ENCODE measurements at regions of chr2 and their contacts with region 1.

Region 1: DNA sequence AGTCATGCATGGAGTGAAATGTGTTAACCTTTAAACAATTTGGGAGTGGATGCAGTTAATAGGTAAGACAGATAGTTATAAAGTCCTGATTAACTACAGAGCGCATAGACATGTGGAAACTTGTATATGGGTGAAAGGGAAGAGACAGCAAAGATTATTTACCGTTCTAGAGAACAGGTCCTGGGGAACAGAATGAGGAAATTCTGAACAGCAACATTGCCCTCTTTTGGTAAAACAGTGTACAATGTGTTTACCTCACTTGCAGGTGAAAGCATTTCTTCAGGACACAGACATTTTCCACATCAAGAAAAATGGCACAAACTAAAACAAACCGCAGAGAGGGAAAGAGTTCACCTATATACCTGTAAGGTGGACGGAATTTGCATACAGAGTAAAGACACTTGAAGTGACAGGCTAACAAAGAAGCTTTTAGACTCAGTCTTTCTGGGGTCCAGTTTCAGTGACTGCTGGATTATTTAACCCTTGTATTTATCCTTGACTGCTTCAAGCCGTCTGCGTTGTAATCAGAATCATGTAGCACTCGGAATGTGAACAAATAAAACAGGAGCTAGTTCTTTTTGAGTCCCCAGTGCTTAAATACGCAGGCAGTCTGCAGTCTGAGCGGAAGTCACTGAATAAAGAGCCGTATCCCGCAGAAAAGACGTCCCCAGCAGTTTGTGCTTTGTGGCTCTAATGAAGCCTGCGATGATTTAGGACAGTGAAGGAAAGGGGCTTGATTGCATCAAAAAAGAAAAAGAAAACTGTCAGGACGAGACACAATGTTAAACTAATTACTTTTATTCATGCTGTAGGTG is 364.8 kb upstream of the GALNT5 start:
- DNase-seq: peak; percentile 60
- ATAC-seq: peak; percentile 79
- H3K4me3 ChIP-seq: peak overlapping the region; percentile 20
- H3K27ac ChIP-seq: no peak overlapping the region
- H3K4me1 ChIP-seq: no peaks in the 10 kb centered on the region
- H3K27me3 ChIP-seq: no peaks in the 10 kb centered on the region
- CTCF ChIP-seq: peak; percentile 46
- POLR2A ChIP-seq: no peak
- RAD21 ChIP-seq: peak; percentile 56

Region 2: DNA sequence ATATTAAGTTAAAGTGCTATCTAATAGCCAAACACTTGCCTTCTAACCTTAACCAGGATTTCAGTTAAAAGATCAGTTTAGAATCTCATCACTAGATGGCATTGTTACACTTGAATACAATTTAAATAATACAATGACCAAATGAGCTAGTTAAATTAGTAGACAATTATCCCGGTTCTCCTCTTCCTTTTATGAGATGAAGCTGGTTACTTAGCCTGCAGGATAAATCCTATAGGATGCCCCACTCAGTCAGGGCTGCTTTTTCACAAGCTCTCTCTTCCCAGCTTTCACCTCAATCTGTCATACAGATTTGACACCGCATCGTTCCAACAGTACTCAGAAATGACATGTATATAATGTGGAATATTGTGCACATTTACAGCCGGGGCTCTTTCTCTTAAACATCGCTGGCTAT is 1515.4 kb before region 1 on chr2:
- CTCF ChIA-PET with region 1: no interaction called
- POLR2A ChIA-PET with region 1: no interaction called
- dilution Hi-C with region 1: no loop called
- in situ Hi-C with region 1: no loop called
- intact Hi-C with region 1: loop called (anchors 2 kb)
- DNase-seq: peak; percentile 35
- ATAC-seq: no peak
- H3K4me3 ChIP-seq: no peak overlapping the region
- H3K27ac ChIP-seq: no peak overlapping the region
- H3K4me1 ChIP-seq: no peaks in the 10 kb centered on the region
- H3K27me3 ChIP-seq: no peaks in the 10 kb centered on the region
- CTCF ChIP-seq: peak; percentile 43
- POLR2A ChIP-seq: no peak
- RAD21 ChIP-seq: peak; percentile 46

Region 3: DNA sequence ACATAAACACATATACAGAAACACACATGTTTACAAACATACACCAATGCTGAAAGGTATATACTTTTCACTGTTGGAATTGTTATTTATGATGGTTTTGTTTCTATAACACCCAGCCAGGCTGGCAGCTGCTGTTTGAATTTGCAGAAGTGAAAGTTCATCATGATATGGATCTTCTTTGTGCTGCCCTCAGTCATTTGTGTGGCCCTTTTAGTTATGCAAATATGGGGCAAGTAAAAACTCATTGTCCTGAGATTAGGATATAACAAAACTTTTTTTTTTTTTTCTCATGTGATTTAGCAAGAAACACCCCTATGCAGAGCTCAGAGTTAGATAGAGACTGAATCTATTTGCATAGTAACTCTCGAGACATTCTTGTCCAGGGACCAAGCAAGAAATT is 1480.1 kb before region 1 on chr2:
- CTCF ChIA-PET with region 1: interaction called, 10 read pairs
- POLR2A ChIA-PET with region 1: no interaction called
- dilution Hi-C with region 1: no loop called
- in situ Hi-C with region 1: no loop called
- intact Hi-C with region 1: no loop called
- DNase-seq: no peak
- ATAC-seq: no peak
- H3K4me3 ChIP-seq: no peak overlapping the region
- H3K27ac ChIP-seq: no peak overlapping the region
- H3K4me1 ChIP-seq: no peaks in the 10 kb centered on the region
- H3K27me3 ChIP-seq: no peaks in the 10 kb centered on the region
- CTCF ChIP-seq: no peak
- POLR2A ChIP-seq: no peak
- RAD21 ChIP-seq: no peak

Region 4: GRCh38 chr2:156192468-156192867 is 700.2 kb before region 1 on chr2:
- CTCF ChIA-PET with region 1: no interaction called
- POLR2A ChIA-PET with region 1: no interaction called
- dilution Hi-C with region 1: no loop called
- in situ Hi-C with region 1: no loop called
- intact Hi-C with region 1: loop called (anchors 5 kb)
- DNase-seq: no peak
- ATAC-seq: no peak
- H3K4me3 ChIP-seq: no peak overlapping the region
- H3K27ac ChIP-seq: no peak overlapping the region
- H3K4me1 ChIP-seq: no peaks in the 10 kb centered on the region
- H3K27me3 ChIP-seq: no peaks in the 10 kb centered on the region
- CTCF ChIP-seq: 0 out of 2 replicates have a peak, but pooled peaks have one; percentile 27
- POLR2A ChIP-seq: no peak
- RAD21 ChIP-seq: no peak

Region 5: GRCh38 chr2:156589381-156590079 is 303.1 kb before region 1 on chr2:
- CTCF ChIA-PET with region 1: no interaction called
- POLR2A ChIA-PET with region 1: no interaction called
- dilution Hi-C with region 1: no loop called
- in situ Hi-C with region 1: no loop called
- intact Hi-C with region 1: loop called (anchors 2 kb)
- DNase-seq: peak; percentile 62
- ATAC-seq: peak; percentile 74
- H3K4me3 ChIP-seq: no peak overlapping the region
- H3K27ac ChIP-seq: no peak overlapping the region
- H3K4me1 ChIP-seq: no peaks in the 10 kb centered on the region
- H3K27me3 ChIP-seq: no peaks in the 10 kb centered on the region
- CTCF ChIP-seq: peak; percentile 72
- POLR2A ChIP-seq: no peak
- RAD21 ChIP-seq: peak; percentile 85

Region 6: GRCh38 chr2:156792242-156792840 is 100.3 kb before region 1 on chr2:
- CTCF ChIA-PET with region 1: no interaction called
- POLR2A ChIA-PET with region 1: no interaction called
- dilution Hi-C with region 1: no loop called
- in situ Hi-C with region 1: no loop called
- intact Hi-C with region 1: no loop called
- DNase-seq: no peak
- ATAC-seq: no peak
- H3K4me3 ChIP-seq: no peak overlapping the region
- H3K27ac ChIP-seq: no peak overlapping the region
- H3K4me1 ChIP-seq: no peaks in the 10 kb centered on the region
- H3K27me3 ChIP-seq: no peaks in the 10 kb centered on the region
- CTCF ChIP-seq: no peak
- POLR2A ChIP-seq: no peak
- RAD21 ChIP-seq: no peak

Region 7: DNA sequence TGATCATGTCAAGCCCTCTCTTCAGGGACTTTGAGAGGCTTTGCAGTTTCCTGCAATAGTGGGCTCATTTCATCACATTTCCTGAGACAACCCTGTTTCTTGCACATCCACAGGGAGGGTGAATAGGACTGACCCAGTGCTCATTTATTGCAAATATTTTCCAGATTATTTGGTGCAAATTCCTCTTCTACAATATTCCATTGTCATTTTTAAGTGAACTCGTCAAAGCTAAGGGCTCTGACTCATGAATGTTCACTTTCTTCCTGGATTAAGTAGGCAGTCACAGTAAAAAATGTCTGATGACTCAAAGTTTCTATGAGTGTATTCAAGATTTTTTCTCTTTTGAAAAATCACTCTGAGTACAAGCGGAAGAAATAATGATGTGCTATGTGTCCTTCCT is 139.3 kb after region 1 on chr2:
- CTCF ChIA-PET with region 1: no interaction called
- POLR2A ChIA-PET with region 1: no interaction called
- dilution Hi-C with region 1: no loop called
- in situ Hi-C with region 1: no loop called
- intact Hi-C with region 1: loop called (anchors 5 kb)
- DNase-seq: peak; percentile 94
- ATAC-seq: peak; percentile 83
- H3K4me3 ChIP-seq: no peak overlapping the region
- H3K27ac ChIP-seq: 0 out of 2 replicates have a peak overlapping the region, but pooled peaks have one; percentile 26
- H3K4me1 ChIP-seq: peaks cover 4% of the 10 kb centered on the region; the same call in 1 of the 2 replicates
- H3K27me3 ChIP-seq: no peaks in the 10 kb centered on the region
- CTCF ChIP-seq: no peak
- POLR2A ChIP-seq: no peak
- RAD21 ChIP-seq: no peak

Region 8: GRCh38 chr2:157182834-157183396 is 290.2 kb after region 1 on chr2:
- CTCF ChIA-PET with region 1: interaction called, 5 read pairs
- POLR2A ChIA-PET with region 1: no interaction called
- dilution Hi-C with region 1: no loop called
- in situ Hi-C with region 1: loop called (anchors 10 kb)
- intact Hi-C with region 1: no loop called
- DNase-seq: peak; percentile 97
- ATAC-seq: peak; percentile 80
- H3K4me3 ChIP-seq: no peak overlapping the region
- H3K27ac ChIP-seq: peak overlapping the region; percentile 92
- H3K4me1 ChIP-seq: peaks cover 20% of the 10 kb centered on the region
- H3K27me3 ChIP-seq: no peaks in the 10 kb centered on the region
- CTCF ChIP-seq: no peak
- POLR2A ChIP-seq: peak; percentile 69
- RAD21 ChIP-seq: no peak; the same call in 1 of the 2 replicates

Region 9: GRCh38 chr2:157876066-157876787 is 983.6 kb after region 1 on chr2 and contains the start of gene ACVR1:
- CTCF ChIA-PET with region 1: no interaction called
- POLR2A ChIA-PET with region 1: no interaction called
- dilution Hi-C with region 1: no loop called
- in situ Hi-C with region 1: no loop called
- intact Hi-C with region 1: no loop called
- DNase-seq: peak; percentile 98
- ATAC-seq: peak; percentile 86
- H3K4me3 ChIP-seq: peak within 1 kb of the TSS; percentile 98
- H3K27ac ChIP-seq: peak within 1 kb of the TSS; percentile 98
- H3K4me1 ChIP-seq: peaks cover 8% of the 10 kb centered on the region
- H3K27me3 ChIP-seq: no peaks in the 10 kb centered on the region
- CTCF ChIP-seq: peak; percentile 52
- POLR2A ChIP-seq: 0 out of 2 replicates have a peak, but pooled peaks have one; percentile 40
- RAD21 ChIP-seq: peak; percentile 33
- total RNA-seq, gene ACVR1: 21.1 and 24.2 TPM in 2 replicates

Measured in IMR-90 (cell line).